ENCODE measurements at regions of chr18 and their contacts with region 1.

Region 1: GRCh38 chr18:34431042-34431441 is 206.3 kb upstream of the NOL4 start:
- DNase-seq: no peak

Region 2: DNA sequence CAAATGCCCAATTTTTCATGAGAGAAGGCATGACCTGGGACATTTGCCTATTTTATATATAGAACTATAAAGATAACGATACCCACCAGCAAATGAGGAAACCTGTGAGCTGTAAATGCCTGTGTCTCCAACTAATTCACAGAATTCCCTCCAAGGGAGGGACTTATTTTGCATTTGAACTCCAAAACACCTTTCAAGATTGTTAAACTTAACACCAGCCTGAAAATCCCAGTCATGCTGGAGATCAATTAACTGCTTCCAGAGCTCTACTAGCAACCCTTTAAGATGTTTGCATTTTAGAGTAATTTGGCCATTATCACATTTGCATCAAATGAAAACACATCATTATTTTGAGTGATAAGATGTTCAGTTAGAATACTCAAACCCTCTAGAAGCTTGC is 1590.1 kb before region 1 on chr18:
- intact Hi-C with region 1: no loop called
- DNase-seq: no peak

Region 3: DNA sequence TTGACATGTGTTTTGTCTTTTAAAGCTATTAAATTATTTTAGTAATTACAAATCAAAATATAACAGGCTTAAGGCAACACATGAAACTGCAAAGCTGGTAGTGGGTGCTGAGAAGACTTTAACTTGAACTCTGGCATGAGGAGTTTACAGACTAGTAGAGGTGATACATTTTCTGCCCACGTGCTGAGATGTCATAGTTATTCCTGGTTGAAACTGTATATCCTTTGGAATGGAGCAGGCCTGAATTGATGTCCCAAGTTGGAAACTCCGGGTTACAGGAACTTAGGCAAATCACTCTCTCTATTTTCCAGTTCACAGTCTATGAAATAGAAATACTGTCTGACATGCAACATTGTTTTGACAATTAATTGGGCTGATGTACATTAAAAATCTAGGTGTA is 29.3 kb before region 1 on chr18:
- intact Hi-C with region 1: loop called (anchors 2 kb)
- DNase-seq: no peak

Region 4: DNA sequence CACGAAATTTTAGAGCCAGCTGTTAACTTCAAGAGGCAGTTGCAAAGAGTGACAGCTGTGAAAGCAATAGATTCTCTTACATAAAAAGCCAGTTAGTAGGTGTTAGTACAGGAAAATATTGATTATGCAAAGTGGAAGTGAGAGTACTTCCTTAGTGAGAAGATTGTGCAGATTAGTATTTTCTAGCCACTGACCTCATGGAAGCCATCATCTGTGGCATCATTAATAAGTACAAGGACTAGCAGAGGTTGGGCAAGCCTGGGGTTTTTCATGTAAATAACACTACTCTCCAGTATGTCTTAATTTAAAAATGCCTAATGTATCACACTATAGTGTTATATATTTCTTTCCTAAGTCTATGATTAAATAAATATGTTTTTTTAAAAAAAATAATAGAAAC is 112.9 kb after region 1 on chr18:
- intact Hi-C with region 1: no loop called
- DNase-seq: no peak

Region 5: GRCh38 chr18:35939138-35939537 is 1508.1 kb after region 1 on chr18:
- intact Hi-C with region 1: no loop called
- DNase-seq: no peak